ENCODE measurements at regions of chr19 and their contacts with region 1.

Region 1: GRCh38 chr19:58021541-58022282 is 12.1 kb upstream of the ZSCAN1 start:
- DNase-seq: peak; percentile 73 to 80
- H3K4me3 ChIP-seq: no peak overlapping the region
- H3K27ac ChIP-seq: no peak overlapping the region
- H3K4me1 ChIP-seq: no peaks in the 10 kb centered on the region
- H3K27me3 ChIP-seq: no peaks in the 10 kb centered on the region
- CTCF ChIP-seq: peak; percentile 58 to 90 (median 84)
- POLR2A ChIP-seq: no peak

Region 2: GRCh38 chr19:57978586-57979289 is 43.0 kb before region 1 on chr19:
- intact Hi-C with region 1: no loop called
- DNase-seq: no peak
- H3K4me3 ChIP-seq: no peak overlapping the region
- H3K27ac ChIP-seq: no peak overlapping the region
- H3K4me1 ChIP-seq: no peaks in the 10 kb centered on the region
- H3K27me3 ChIP-seq: no peaks in the 10 kb centered on the region
- CTCF ChIP-seq: no peak
- POLR2A ChIP-seq: no peak

Region 3: GRCh38 chr19:58154679-58155648 is 133.3 kb after region 1 on chr19:
- intact Hi-C with region 1: loop called (anchors 5 kb)
- DNase-seq: peak; percentile 97 to 98
- H3K4me3 ChIP-seq: peak overlapping the region; percentile 82 to 98 (median 92)
- H3K27ac ChIP-seq: peak overlapping the region; percentile 96 to 99 (median 97)
- H3K4me1 ChIP-seq: peaks cover 15 to 30% of the 10 kb centered on the region in 2 donors
- H3K27me3 ChIP-seq: no peaks in the 10 kb centered on the region
- CTCF ChIP-seq: peak; percentile 82 to 100 (median 96)
- POLR2A ChIP-seq: peak; percentile 18 to 89

Region 4: GRCh38 chr19:58212336-58213074 is 190.8 kb after region 1 on chr19:
- intact Hi-C with region 1: no loop called
- DNase-seq: no peak
- H3K4me3 ChIP-seq: no peak overlapping the region
- H3K27ac ChIP-seq: no peak overlapping the region
- H3K4me1 ChIP-seq: no peaks in the 10 kb centered on the region
- H3K27me3 ChIP-seq: no peaks in the 10 kb centered on the region
- CTCF ChIP-seq: no peak
- POLR2A ChIP-seq: no peak

Measured in thyroid gland (tissue), 4 donors.